Endothelial cell of umbilical vein (primary cell): ENCODE measurements at regions of chr16 and their contacts with region 1.

Region 1: GRCh38 chr16:22694887-22695382 is 119.0 kb upstream of the HS3ST2 start:
- DNase-seq: no peak
- H3K4me3 ChIP-seq: no peak overlapping the region
- H3K27ac ChIP-seq: no peak overlapping the region
- H3K4me1 ChIP-seq: no peaks in the 10 kb centered on the region
- H3K27me3 ChIP-seq: peaks cover 0 to 2% of the 10 kb centered on the region in 2 experiments
- CTCF ChIP-seq: no peak
- POLR2A ChIP-seq: no peak

Region 2: DNA sequence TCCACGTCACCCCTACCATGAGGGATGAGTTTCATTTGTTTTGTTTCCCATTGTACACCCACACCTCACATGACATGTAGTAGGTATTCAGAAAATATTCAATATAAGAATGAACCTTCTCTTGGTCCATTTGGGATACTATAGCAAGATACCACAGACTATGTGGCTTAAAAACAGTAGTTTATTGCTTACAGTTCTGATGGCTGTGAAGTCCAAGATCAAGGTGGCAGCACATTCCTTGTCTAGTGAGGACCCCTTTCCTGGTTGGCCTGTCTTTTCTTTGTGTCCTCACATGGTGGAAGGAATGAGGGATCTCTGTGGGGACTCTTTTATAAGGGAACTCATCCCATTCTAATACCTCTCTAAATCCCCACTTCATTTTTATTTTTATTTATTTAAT is 1380.6 kb before region 1 on chr16:
- CTCF ChIA-PET with region 1: no interaction called
- POLR2A ChIA-PET with region 1: no interaction called
- dilution Hi-C with region 1: no loop called
- intact Hi-C with region 1: loop called (anchors 10 kb)
- DNase-seq: no peak
- H3K4me3 ChIP-seq: no peak overlapping the region
- H3K27ac ChIP-seq: no peak overlapping the region
- H3K4me1 ChIP-seq: no peaks in the 10 kb centered on the region
- H3K27me3 ChIP-seq: no peaks in the 10 kb centered on the region
- CTCF ChIP-seq: no peak
- POLR2A ChIP-seq: no peak